Activated B cell treated with CpG ODN at 0.5 μM for 24 hours (primary cell): ENCODE measurements at regions of chr6 and their contacts with region 1.

Region 1: DNA sequence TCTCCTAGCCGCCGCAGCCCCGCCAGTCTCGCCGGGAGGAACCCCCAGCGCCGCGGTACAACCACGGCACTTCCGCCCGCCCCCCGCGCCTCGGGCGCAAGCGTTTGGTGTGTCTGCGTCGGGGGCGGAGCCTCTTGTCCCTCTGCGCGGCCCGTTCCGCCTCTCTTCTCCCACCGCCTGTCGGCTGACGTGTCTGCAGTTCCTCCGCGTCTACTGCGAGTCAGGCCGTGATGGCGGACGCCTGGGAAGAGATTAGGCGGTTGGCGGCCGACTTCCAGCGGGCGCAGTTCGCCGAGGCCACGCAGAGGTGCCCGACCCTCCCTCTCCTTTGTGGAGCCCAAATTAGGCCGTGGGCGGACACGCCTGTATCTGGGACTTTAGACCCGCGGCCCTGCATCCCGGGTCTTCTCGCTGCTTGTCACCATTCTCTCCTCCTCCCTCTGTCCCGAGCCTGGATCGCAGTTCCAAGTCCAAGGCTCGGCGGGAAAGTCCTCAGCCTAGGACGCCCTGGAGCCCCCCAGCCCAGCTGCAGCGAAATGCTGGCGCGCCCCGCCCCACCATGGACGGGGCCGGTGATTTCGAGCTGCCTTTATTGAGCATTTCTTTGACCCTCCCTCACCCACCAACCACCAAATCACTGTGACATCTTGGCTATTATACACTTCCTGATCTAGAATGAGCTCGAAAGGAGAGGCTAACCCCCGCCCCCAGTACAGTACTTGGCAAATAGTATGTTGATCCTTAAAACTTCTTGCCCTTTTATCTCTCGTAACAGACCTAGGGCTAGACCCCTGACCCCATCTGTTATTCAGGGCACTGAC is at the start of gene UFL1:
- DNase-seq: peak; percentile 91
- ATAC-seq: peak; percentile 94
- H3K4me3 Mint-ChIP-seq: peak within 1 kb of the TSS; percentile 100
- H3K27ac Mint-ChIP-seq: peak within 1 kb of the TSS; percentile 100
- H3K4me1 Mint-ChIP-seq: peaks cover 27% of the 10 kb centered on the region
- H3K27me3 Mint-ChIP-seq: no peaks in the 10 kb centered on the region
- CTCF ChIP-seq: no peak
- total RNA-seq, gene UFL1: 20.7 and 23.6 TPM in 2 replicates

Region 2: GRCh38 chr6:96532399-96532798 is 10.5 kb after region 1 on chr6:
- CTCF ChIA-PET with region 1: no interaction called
- POLR2A ChIA-PET with region 1: interaction called, 8 read pairs
- intact Hi-C with region 1: loop called (anchors 1 kb)
- DNase-seq: no peak
- ATAC-seq: peak; percentile 84
- H3K4me3 Mint-ChIP-seq: peak overlapping the region; percentile 41
- H3K27ac Mint-ChIP-seq: peak overlapping the region; percentile 76
- H3K4me1 Mint-ChIP-seq: peaks cover 16% of the 10 kb centered on the region
- H3K27me3 Mint-ChIP-seq: no peaks in the 10 kb centered on the region
- CTCF ChIP-seq: no peak

Region 3: DNA sequence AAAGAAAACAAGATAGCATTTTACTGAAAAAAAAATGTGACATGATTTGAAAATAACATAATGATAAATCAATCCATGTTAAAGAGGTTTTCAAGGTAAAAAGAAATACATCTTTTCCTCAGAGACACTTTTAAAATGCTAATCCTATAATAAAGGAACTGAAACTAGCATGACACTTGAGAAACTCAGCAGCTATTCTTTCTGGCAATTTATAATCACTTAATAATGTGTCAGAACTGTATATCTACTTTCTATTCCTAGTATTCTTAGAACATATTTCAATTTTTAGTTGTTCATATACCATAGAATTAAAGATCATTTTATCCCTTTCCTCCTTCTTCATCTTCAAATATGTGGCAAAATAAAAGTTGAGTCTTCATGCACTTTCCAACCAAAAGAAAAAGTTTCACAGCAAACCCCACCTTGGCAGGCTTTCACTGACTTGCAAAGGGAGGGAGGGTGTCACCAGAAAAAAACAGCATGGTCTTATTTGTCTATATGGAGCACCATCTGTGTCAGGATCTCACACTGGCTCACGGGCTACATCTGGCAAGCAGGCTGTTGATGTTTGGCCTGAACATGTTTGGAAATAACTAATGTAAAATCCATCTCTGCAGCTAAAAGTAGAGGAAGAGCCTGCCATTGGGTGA is 89.6 kb after region 1 on chr6:
- CTCF ChIA-PET with region 1: no interaction called
- POLR2A ChIA-PET with region 1: interaction called, 3 read pairs
- intact Hi-C with region 1: loop called (anchors 2 kb)
- DNase-seq: no peak
- ATAC-seq: peak; percentile 47
- H3K4me3 Mint-ChIP-seq: no peak overlapping the region
- H3K27ac Mint-ChIP-seq: no peak overlapping the region
- H3K4me1 Mint-ChIP-seq: peaks cover 28% of the 10 kb centered on the region
- H3K27me3 Mint-ChIP-seq: peaks cover 6% of the 10 kb centered on the region
- CTCF ChIP-seq: no peak

Region 4: GRCh38 chr6:96923871-96924493 is 402.1 kb after region 1 on chr6:
- CTCF ChIA-PET with region 1: interaction called, 3 read pairs
- POLR2A ChIA-PET with region 1: interaction called, 10 read pairs
- intact Hi-C with region 1: loop called (anchors 1 kb)
- DNase-seq: no peak
- ATAC-seq: peak; percentile 10
- H3K4me3 Mint-ChIP-seq: peak overlapping the region; percentile 94
- H3K27ac Mint-ChIP-seq: peak overlapping the region; percentile 92
- H3K4me1 Mint-ChIP-seq: peaks cover 24% of the 10 kb centered on the region
- H3K27me3 Mint-ChIP-seq: peaks cover 3% of the 10 kb centered on the region
- CTCF ChIP-seq: no peak

Region 5: DNA sequence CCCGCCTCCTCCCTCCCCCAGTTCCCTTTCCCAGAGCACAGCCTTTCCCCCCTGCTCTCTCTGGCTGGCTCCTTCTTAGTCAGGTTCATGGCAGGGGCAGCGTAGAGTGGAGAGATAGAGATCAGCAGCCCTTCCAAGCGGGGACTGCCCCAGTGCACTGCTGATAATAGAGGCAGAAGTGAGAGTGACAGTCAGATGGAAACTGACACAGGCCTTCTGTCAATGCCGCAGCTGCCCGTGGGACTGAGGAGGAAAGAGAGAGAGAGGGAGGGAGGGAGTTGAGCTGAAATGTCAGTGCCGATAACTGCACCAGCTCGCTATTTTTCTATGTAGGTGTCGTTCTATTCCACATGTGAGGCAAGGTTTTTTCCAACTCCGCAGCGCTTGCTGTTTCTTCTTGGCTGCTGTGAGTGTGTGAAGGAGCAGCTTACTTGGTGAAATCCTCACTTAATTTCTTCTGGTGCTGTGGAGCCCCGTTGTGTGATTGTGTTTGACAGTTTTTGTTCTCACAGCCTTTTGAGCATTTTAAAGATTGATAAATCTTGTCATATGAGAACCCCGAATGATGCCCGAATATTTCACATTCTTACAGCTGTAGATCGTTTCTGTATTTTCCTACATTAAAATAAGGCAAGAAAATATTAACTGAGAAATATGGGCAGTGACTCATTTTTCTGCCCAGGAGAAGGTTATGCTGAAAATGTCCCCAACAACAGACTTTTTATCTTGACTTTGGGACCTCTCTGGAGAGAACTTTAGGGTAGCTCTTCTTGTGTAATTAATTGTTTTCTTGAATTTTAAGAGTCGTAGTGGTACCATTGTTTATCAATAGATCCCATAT is 1147.6 kb after region 1 on chr6:
- CTCF ChIA-PET with region 1: no interaction called
- POLR2A ChIA-PET with region 1: no interaction called
- intact Hi-C with region 1: loop called (anchors 1 kb)
- DNase-seq: peak; percentile 28
- ATAC-seq: peak; percentile 95
- H3K4me3 Mint-ChIP-seq: no peak overlapping the region
- H3K27ac Mint-ChIP-seq: no peak overlapping the region
- H3K4me1 Mint-ChIP-seq: no peaks in the 10 kb centered on the region
- H3K27me3 Mint-ChIP-seq: no peaks in the 10 kb centered on the region
- CTCF ChIP-seq: no peak